ENCODE measurements at regions of chr7 and their contacts with region 1.

Region 1: DNA sequence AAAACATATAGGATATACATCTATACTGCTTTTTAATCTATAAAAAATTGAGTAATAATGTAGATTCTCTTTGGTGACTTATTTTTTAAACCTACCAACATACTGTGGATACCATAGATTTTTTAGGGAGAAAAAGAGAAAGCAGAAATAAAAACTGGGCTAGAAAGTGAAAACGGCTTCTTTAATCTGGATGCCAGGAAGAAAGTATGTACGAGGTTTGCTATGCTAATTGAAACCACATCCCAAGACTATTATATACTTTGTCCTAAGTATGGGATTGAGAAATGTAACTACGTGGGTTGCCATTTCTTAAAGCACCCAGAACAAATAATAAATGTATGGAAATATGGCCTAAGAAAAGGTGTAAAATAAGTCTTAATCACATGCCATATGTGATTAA is 129.0 kb upstream of the NFE2L3 start:
- DNase-seq: peak; percentile 24
- H3K4me3 ChIP-seq: no peak overlapping the region
- H3K27ac ChIP-seq: no peak overlapping the region
- H3K4me1 ChIP-seq: peaks cover 6% of the 10 kb centered on the region
- H3K27me3 ChIP-seq: no peaks in the 10 kb centered on the region
- CTCF ChIP-seq: no peak

Region 2: GRCh38 chr7:25982684-25983083 is 40.3 kb before region 1 on chr7:
- CTCF ChIA-PET with region 1: no interaction called
- POLR2A ChIA-PET with region 1: no interaction called
- intact Hi-C with region 1: no loop called
- DNase-seq: peak; percentile 31
- H3K4me3 ChIP-seq: no peak overlapping the region
- H3K27ac ChIP-seq: no peak overlapping the region
- H3K4me1 ChIP-seq: no peaks in the 10 kb centered on the region
- H3K27me3 ChIP-seq: no peaks in the 10 kb centered on the region
- CTCF ChIP-seq: no peak

Region 3: DNA sequence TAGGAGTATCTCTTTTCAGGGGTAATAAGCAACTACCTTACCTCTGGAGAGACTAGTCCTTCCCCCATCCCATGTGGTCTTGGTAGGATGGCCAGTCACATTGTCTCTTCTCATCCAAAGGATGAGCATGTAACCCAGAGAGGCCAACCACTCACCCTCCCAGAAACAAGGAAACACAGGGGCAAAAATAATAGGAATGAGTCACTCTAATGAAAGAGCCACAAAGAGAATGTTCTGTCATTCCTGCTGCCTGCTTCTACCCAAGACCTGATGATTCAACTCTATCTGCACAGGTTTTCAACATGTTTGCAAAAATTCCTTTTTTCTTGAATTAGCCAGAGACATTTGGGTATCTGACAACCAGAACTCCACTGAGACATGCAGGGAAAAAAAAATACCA is 29.7 kb after region 1 on chr7:
- CTCF ChIA-PET with region 1: no interaction called
- POLR2A ChIA-PET with region 1: no interaction called
- intact Hi-C with region 1: no loop called
- DNase-seq: no peak
- H3K4me3 ChIP-seq: no peak overlapping the region
- H3K27ac ChIP-seq: no peak overlapping the region
- H3K4me1 ChIP-seq: no peaks in the 10 kb centered on the region
- H3K27me3 ChIP-seq: no peaks in the 10 kb centered on the region
- CTCF ChIP-seq: no peak

Region 4: DNA sequence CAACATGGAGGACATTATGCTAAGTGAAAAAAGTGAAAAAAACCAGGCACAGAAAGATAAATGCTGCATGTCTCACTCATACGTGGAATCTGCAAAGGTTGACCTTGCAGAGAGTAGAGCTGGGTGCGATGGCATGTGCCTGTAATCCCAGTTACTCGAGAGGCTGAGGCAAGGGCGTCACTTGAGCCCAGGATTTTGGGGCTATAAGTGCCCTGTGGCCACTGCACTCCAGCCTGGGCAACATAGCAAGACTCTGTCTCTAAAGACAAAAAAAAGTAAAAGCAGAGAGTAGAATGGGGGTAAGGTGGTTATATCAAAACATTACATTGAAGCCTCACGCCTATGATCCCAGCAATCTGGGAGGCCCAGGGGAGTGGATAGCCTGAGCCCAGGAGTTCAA is 201.4 kb after region 1 on chr7:
- CTCF ChIA-PET with region 1: no interaction called
- POLR2A ChIA-PET with region 1: interaction called, 12 read pairs
- intact Hi-C with region 1: no loop called
- DNase-seq: no peak
- H3K4me3 ChIP-seq: no peak overlapping the region
- H3K27ac ChIP-seq: no peak overlapping the region
- H3K4me1 ChIP-seq: no peaks in the 10 kb centered on the region
- H3K27me3 ChIP-seq: no peaks in the 10 kb centered on the region
- CTCF ChIP-seq: no peak